ENCODE measurements at regions of chr22 and their contacts with region 1.

Region 1: DNA sequence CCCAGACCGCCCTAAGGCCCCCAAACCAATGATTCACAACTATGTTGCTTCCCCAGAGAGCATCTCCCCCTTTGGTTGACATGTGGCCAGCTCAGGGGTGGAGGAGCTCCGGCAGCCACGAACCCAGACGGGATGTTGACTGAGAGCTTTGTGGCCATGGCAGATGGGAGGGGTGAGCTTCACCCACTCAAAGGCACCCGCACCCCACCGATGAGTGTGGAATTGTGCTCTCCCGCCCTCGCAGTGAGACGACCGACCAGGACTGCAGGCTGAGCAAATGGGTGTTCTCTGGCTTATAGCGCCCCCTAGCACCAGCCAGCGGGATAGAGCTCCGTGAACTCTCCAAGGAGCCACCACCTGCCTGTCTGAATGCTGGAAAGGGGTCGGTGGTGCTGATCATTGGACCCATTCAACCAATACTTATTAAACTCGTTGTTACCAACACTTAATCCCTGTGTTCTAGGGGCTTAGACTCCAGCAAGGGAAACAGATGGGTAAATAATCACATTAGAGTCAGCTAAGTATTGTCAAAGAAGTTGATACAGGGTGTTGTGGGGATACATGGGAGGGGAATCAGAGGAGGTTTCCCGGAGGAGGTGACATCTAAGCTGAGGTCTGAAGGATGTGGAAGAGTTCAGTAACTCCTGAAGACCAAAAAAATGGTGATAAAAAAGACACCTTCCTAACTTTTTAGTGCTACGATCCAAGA is 4.5 kb upstream of the TIMP3 start:
- DNase-seq: peak; percentile 77 to 87 (median 84)
- ATAC-seq: peak; percentile 28 to 74 (median 66)
- H3K4me3 ChIP-seq: no peak overlapping the region
- H3K27ac ChIP-seq: peak overlapping the region in 6 of 12 donors; percentile 11 to 51 (median 29)
- H3K4me1 ChIP-seq: peaks cover 0 to 37% (median 13%) of the 10 kb centered on the region in 12 donors
- H3K27me3 ChIP-seq: peaks cover 0 to 13% (median 0%) of the 10 kb centered on the region in 9 donors
- CTCF ChIP-seq: peak; percentile 82 to 93 (median 91)
- POLR2A ChIP-seq: no peak

Region 2: DNA sequence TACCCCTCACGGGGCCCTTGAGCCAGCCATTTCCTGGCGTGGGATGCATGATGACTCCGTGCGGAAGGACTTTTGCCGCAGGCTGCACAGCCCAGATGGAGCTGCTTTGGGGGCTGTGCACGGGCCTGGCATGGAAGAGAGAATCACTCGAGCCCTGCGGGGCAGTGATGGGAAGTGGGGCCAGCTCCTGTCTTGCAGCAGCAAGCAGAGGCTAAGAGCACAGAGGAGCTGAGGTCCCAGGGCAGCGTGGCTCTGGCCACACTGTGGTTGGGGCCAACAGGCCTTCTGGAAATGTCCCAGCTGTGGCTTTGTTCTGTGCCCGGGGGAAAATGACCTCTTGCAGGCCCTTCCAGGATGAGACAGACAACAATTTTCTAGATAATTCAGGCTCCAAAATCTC is 88.2 kb before region 1 on chr22:
- intact Hi-C with region 1: no loop called
- DNase-seq: peak in 4 of 5 donors; percentile 18 to 71 (median 56)
- ATAC-seq: peak in 3 of 4 donors; percentile 42 to 75 (median 66)
- H3K4me3 ChIP-seq: no peak overlapping the region
- H3K27ac ChIP-seq: peak overlapping the region in 5 of 12 donors; percentile 6 to 31 (median 26)
- H3K4me1 ChIP-seq: peaks cover 0 to 15% (median 0%) of the 10 kb centered on the region in 12 donors
- H3K27me3 ChIP-seq: no peaks in the 10 kb centered on the region
- CTCF ChIP-seq: no peak
- POLR2A ChIP-seq: no peak

Region 3: DNA sequence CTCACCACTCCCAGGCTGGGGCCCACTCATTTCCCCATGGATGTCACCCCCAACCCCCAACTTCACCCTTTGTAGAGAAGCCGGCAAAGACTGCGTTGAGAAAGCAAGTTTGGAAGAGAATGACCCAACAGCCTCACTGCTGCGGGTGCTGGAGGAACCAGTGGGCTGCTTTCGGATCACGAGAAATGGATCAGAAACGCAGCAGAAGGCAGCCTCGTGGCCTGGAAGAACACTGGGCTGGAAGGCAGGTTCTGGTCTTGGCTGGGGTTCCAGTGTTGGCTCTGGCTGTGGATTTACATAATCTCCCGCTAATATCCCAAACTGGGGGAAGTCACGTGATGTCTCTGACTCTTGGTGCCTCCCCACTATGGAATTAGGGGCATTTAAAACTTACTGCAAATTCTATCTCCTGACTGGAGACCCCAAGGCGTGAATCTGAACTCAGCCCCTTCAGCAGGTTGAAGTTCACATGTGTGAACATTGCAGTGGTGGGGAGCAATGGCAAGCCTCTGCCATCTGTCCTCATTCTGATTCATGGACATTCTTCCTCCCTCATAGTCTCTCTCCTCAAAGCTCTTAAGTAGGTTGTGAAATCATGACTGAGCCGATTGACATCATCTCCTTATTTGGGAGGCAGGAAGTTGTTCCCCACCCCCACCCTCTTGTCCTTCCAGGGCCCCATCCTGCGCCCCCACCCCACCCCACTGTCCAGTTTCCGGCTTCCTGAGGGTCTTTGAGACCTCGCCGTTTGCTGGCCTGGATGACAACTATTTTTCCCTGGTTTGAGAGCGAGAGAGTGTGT is 32.5 kb before region 1 on chr22:
- intact Hi-C with region 1: loop called in 1 of 10 experiments (anchors 5 kb)
- DNase-seq: peak; percentile 38 to 76 (median 72)
- ATAC-seq: peak; percentile 22 to 81 (median 70)
- H3K4me3 ChIP-seq: no peak overlapping the region
- H3K27ac ChIP-seq: peak overlapping the region; percentile 64 to 89 (median 72)
- H3K4me1 ChIP-seq: peaks cover 5 to 53% (median 33%) of the 10 kb centered on the region in 12 donors
- H3K27me3 ChIP-seq: peaks cover 0 to 3% (median 0%) of the 10 kb centered on the region in 9 donors
- CTCF ChIP-seq: no peak
- POLR2A ChIP-seq: no peak

Region 4: GRCh38 chr22:32850591-32851517 is 53.8 kb after region 1 on chr22:
- intact Hi-C with region 1: loop called in 6 of 10 experiments (anchors 1 to 5 kb)
- DNase-seq: peak; percentile 67 to 89 (median 77)
- ATAC-seq: peak; percentile 23 to 53 (median 28)
- H3K4me3 ChIP-seq: no peak overlapping the region
- H3K27ac ChIP-seq: peak overlapping the region; percentile 69 to 94 (median 83)
- H3K4me1 ChIP-seq: peaks cover 41 to 100% (median 85%) of the 10 kb centered on the region in 12 donors
- H3K27me3 ChIP-seq: no peaks in the 10 kb centered on the region
- CTCF ChIP-seq: no peak
- POLR2A ChIP-seq: no peak

Region 5: GRCh38 chr22:32985899-32986765 is 189.1 kb after region 1 on chr22:
- intact Hi-C with region 1: loop called in 9 of 10 experiments (anchors 1 to 5 kb)
- DNase-seq: peak in 4 of 5 donors; percentile 73 to 82 (median 76)
- ATAC-seq: peak; percentile 87 to 99 (median 97)
- H3K4me3 ChIP-seq: no peak overlapping the region
- H3K27ac ChIP-seq: peak overlapping the region in 1 of 12 donors; percentile 35
- H3K4me1 ChIP-seq: peaks cover 0 to 10% (median 3%) of the 10 kb centered on the region in 12 donors
- H3K27me3 ChIP-seq: no peaks in the 10 kb centered on the region
- CTCF ChIP-seq: peak; percentile 84 to 95 (median 92)
- POLR2A ChIP-seq: no peak